Adrenal gland (tissue), 19 donors: ENCODE measurements at regions of chr2 and their contacts with region 1.

Region 1: GRCh38 chr2:178280244-178280852 is 86.0 kb downstream of the OSBPL6 start:
- DNase-seq: peak in 6 of 7 donors; percentile 20 to 68 (median 50)
- H3K4me3 ChIP-seq: no peak overlapping the region
- H3K27ac ChIP-seq: no peak overlapping the region
- H3K4me1 ChIP-seq: no peaks in the 10 kb centered on the region
- H3K27me3 ChIP-seq: no peaks in the 10 kb centered on the region
- CTCF ChIP-seq: peak; percentile 74 to 85 (median 80)
- POLR2A ChIP-seq: no peak

Region 2: GRCh38 chr2:178112202-178113152 is 167.9 kb before region 1 on chr2 and contains the start of gene RBM45:
- intact Hi-C with region 1: loop called in 1 of 2 experiments (anchors 5 kb)
- DNase-seq: peak; percentile 90 to 96 (median 93)
- H3K4me3 ChIP-seq: peak within 1 kb of the TSS; percentile 3 to 81 (median 47)
- H3K27ac ChIP-seq: peak within 1 kb of the TSS in 4 of 5 donors; percentile 24 to 73 (median 62)
- H3K4me1 ChIP-seq: peaks cover 0 to 12% of the 10 kb centered on the region in 2 donors
- H3K27me3 ChIP-seq: no peaks in the 10 kb centered on the region
- CTCF ChIP-seq: peak; percentile 91 to 99 (median 96)
- POLR2A ChIP-seq: peak; percentile 32 to 62
- total RNA-seq, gene RBM45: 5.2 to 27.1 (median 11.9) TPM

Region 3: GRCh38 chr2:178136321-178137025 is 143.9 kb before region 1 on chr2:
- intact Hi-C with region 1: loop called in 1 of 2 experiments (anchors 10 kb)
- DNase-seq: no peak
- H3K4me3 ChIP-seq: no peak overlapping the region
- H3K27ac ChIP-seq: no peak overlapping the region
- H3K4me1 ChIP-seq: no peaks in the 10 kb centered on the region
- H3K27me3 ChIP-seq: no peaks in the 10 kb centered on the region
- CTCF ChIP-seq: no peak
- POLR2A ChIP-seq: no peak

Region 4: GRCh38 chr2:178345951-178346350 is 65.6 kb after region 1 on chr2:
- intact Hi-C with region 1: no loop called
- DNase-seq: no peak
- H3K4me3 ChIP-seq: no peak overlapping the region
- H3K27ac ChIP-seq: no peak overlapping the region
- H3K4me1 ChIP-seq: no peaks in the 10 kb centered on the region
- H3K27me3 ChIP-seq: no peaks in the 10 kb centered on the region
- CTCF ChIP-seq: no peak
- POLR2A ChIP-seq: no peak

Region 5: DNA sequence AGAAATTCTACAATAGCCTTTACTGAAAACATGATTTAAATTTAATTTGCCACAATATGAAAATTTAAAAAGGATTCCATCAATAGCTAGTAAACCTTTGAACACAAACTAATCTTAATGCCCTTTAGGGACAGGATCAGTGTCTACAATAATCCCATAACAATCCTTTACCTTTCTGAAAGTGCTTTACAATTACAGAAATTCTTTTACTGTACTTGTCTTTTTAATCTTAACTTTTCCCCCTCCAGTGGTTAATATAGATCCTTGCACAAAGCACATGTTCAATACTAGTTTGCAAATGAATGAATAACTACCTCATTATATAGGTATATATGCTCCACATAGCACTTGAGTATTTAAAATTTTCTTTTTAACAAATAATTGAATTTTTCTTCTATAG is 322.6 kb after region 1 on chr2:
- intact Hi-C with region 1: no loop called
- DNase-seq: no peak
- H3K4me3 ChIP-seq: no peak overlapping the region
- H3K27ac ChIP-seq: no peak overlapping the region
- H3K4me1 ChIP-seq: no peaks in the 10 kb centered on the region
- H3K27me3 ChIP-seq: no peaks in the 10 kb centered on the region
- CTCF ChIP-seq: no peak
- POLR2A ChIP-seq: no peak